Cardiac septum (tissue), 1 donor: ENCODE measurements at regions of chr4 and their contacts with region 1.

Region 1: GRCh38 chr4:25159884-25160713 is at the start of gene SEPSECS:
- DNase-seq: peak; percentile 98
- total RNA-seq, gene SEPSECS: 6.6 TPM

Region 2: DNA sequence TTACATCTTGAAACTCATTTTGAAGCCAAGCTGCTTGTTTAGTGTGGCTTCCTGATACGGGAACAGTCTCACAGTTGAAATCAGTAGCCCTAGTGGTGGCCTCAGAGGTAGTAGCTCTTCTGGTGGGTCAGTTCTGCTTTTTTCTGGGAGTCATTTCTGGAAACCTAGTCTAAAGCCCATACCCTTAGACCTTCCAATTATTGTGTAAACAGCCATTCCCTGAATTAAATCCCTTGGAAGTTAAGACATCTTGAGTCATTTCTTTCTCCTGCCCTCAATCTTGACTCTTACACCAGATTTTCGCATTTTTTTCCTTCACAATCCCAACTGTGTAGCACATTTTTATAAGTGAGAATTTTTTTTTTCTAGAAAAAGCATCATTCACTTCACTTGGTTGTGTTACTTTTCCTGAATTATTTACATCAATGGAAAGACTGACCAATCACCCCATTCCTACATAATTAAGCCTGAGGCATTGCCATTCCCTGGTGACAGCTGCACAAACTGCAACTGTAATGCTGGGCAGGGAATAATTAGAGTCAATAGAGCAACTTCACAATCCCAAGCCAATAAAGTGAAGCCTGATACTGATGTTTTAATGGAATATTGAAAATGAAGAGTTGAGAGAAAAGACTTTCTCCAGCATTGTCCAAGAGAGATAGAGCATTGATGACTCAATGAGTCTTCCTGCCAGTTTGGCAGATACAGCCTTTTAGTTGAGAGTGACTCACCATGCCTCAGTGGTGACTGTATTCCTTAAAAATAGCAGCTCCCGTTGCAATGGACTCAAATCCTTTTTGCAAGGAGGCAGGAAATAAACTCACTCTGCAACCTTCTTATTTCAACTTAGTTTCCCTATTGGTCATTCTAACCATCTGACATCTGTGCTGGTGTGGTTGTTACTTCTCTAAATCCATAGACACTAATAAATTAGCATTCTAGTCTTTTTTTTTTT is 13.1 kb after region 1 on chr4:
- intact Hi-C with region 1: loop called (anchors 1 kb)
- DNase-seq: no peak

Region 3: DNA sequence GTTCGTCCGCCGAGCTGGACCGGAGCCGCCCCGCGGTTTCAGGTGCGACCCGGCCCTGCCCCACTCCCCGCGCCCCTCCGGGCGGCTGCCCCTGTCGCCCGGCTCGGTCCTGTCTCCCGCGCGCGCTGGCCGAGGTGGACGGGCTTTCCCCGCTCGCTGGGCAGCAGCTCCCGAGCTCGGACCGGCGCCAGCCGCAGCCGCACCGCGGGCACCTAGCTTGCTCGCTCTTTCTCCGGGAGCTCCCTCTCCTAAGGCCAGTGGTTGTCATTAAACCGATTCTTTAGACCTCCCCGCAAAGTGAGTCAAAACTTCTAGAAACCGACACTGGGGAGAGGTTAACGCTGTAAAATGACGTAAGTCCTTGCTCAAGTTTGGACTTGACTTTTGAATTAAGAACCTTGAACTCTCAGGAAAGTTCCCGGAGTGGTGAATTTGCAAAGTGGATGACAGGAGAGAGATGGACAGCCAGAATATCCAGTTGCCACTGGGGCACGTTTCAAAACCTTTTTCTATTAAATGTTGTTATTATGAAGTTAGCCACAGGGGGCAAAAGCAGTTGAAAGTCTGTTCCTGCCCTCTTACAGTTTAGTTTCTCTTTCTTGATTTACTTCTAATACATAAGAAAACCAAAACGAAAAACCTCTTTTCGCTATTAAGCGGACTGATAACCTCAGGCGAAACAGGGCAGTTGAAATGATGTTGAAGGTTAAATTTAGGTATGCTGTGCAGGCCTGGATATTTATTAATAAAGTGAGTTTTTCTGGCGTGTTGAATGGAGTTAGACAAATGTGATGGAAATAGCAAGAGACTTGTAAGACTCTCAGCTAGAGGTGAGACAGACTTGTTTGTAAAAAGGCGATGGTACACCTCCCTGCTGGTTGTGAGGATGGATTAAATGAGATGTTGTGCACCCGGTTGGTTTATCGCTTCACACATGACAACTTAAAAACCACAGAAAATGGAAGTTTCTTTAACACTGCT is 74.6 kb after region 1 on chr4:
- intact Hi-C with region 1: loop called (anchors 1 kb)
- DNase-seq: peak; percentile 84